ENCODE measurements at regions of chr2 and their contacts with region 1.

Region 1: DNA sequence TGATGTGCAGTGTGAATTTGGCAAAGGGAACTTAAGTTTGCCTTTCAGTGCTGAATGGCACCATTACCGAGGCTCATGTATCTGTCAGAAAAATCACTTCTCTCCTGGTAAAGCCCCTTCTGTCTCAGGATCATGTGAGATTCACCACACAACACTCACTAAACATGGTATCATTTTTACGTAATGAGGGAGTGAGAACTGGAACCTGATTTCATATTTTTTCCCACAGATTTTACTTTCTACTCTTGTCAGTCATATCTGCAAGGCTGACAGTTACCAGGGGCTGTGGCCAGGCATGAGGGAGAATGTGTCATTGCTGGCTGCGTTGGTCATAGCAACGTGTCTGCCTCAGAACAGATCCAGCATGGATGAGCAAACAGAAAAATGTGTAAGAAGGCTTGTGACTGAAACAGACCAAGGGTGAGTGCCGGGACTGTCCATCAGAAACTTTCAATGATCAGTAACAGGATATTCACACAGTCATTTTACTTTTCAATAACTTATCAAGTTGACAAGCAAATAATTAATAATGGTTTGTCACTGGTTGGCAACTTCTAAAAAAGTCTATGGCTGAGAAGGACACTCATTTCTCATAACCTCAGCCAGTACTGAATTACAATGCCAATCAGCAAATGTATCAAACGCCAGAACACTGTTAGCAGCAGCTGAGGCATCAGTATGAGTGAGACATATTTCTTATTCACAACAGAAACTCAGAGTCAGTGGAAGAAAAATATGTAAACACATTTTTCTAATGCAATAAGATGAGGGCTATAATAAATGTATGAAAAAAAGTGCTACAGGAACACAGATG is 100.5 kb downstream of the CDC42EP3 start:
- DNase-seq: peak; percentile 93
- ATAC-seq: peak; percentile 37
- H3K4me3 ChIP-seq: no peak overlapping the region
- H3K27ac ChIP-seq: peak overlapping the region; percentile 30
- H3K4me1 ChIP-seq: peaks cover 28% of the 10 kb centered on the region
- H3K27me3 ChIP-seq: no peaks in the 10 kb centered on the region
- CTCF ChIP-seq: no peak
- POLR2A ChIP-seq: no peak
- RAD21 ChIP-seq: 0 out of 2 replicates have a peak, but pooled peaks have one; percentile 13

Region 2: GRCh38 chr2:37635504-37636380 is 64.8 kb after region 1 on chr2:
- CTCF ChIA-PET with region 1: interaction called, 3 read pairs
- POLR2A ChIA-PET with region 1: no interaction called
- dilution Hi-C with region 1: no loop called
- in situ Hi-C with region 1: no loop called
- intact Hi-C with region 1: loop called (anchors 5 kb)
- DNase-seq: peak; percentile 82
- ATAC-seq: no peak
- H3K4me3 ChIP-seq: no peak overlapping the region
- H3K27ac ChIP-seq: no peak overlapping the region
- H3K4me1 ChIP-seq: peaks cover 12% of the 10 kb centered on the region
- H3K27me3 ChIP-seq: no peaks in the 10 kb centered on the region
- CTCF ChIP-seq: no peak
- POLR2A ChIP-seq: no peak
- RAD21 ChIP-seq: no peak